ENCODE measurements at regions of chr17 and their contacts with region 1.

Region 1: DNA sequence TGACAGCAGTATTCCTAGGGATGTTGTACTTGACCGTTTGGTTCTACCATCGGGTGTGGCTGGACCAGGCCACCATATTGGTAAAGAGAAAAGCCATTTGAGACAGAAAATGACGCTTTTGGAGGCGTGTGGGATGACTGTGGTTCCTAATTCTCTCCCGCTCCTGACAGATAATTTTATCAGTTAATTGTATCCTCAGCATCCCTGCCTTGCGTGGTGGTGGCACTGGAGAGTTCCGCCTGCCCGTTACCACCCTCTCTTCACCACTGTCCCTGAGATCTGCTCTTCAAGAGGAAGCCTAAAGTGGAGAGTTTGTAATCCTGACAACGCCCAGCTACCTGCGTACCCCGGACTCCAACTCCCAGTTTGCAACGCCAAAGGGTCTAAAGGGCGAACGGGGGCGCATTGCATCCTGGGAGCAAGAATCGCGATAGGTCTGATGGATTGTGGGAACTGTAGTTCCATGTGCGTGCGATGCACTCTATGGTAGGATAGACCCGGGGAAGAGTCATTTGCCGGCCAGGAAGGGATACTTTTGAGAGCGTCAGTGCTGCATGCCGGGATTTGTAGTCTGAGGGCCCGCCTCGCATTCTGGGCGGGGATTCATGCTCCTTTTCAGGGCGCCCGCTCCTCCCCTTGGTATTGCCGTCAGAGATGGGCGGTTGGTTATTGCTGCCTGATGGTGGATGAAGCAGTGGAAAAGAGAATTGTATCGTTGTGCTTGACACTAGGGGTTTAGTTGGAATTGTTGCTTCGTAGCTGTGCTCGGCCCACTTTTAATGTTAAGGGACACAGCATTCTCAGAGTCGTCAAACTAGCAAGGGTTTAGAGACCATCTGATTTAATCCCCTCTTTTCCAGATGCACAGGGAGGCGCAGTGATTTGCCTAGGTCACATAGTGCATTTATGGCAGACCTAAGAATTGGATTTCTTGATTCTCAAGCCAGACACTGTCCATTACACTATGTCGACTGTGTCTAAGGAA is 965 bp upstream of the PHF12 start:
- DNase-seq: peak; percentile 94 to 98 (median 98)
- ATAC-seq: peak; percentile 82 to 91 (median 88)
- H3K4me3 ChIP-seq: peak overlapping the region; percentile 27 to 99 (median 74)
- H3K27ac ChIP-seq: peak overlapping the region; percentile 90 to 100 (median 99)
- H3K4me1 ChIP-seq: peaks cover 0 to 40% (median 19%) of the 10 kb centered on the region in 12 donors
- H3K27me3 ChIP-seq: no peaks in the 10 kb centered on the region
- CTCF ChIP-seq: peak in 1 of 12 donors; percentile 15
- POLR2A ChIP-seq: peak in 1 of 2 donors; percentile 46

Region 2: DNA sequence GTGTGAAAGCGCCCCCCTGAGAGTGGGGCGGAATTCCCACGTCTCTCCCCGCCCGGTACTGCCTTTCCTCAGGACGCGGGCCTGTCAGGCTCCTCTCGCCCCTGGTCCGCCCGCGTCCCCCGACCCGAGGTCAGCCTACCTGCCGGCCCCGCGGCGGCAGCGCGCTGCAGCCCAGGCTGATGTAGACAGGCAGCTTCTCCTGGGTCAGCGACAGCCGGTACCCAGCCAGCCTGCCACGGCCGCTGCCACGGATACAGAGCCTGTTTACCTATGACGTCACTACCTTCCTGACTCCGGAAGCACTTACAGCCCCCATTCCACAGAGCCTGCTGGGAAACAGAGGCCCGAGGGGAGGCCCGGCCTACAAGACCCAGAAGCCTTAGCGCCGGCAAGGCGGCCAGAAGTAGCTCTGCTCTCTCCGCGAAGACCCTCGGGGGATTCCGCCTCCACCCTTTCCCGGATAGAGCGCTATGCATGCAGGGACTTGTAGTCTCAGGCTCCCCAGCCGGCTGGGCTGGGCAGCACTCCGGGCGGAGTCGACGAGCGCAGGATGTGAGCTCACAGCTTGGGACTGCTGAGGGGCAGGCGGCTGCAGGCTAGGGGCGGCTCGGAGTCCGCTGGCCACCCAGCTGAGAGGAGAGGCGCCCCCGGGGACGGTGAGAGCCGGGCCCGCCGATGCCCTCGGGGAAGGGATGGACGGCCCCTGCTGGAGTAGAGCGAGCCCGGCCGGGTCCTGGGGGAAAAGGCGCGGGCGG is 616.9 kb before region 1 on chr17 and contains the starts of genes IFT20 and TNFAIP1:
- intact Hi-C with region 1: loop called in 3 of 10 experiments (anchors 5 to 10 kb)
- DNase-seq: peak; percentile 99 to 100 (median 99)
- ATAC-seq: peak; percentile 96 to 98 (median 96)
- H3K4me3 ChIP-seq: peak within 1 kb of the TSS; percentile 70 to 99 (median 88)
- H3K27ac ChIP-seq: peak within 1 kb of the TSS; percentile 93 to 100 (median 98)
- H3K4me1 ChIP-seq: peaks cover 0 to 60% (median 54%) of the 10 kb centered on the region in 12 donors
- H3K27me3 ChIP-seq: no peaks in the 10 kb centered on the region
- CTCF ChIP-seq: no peak
- POLR2A ChIP-seq: peak; percentile 79 to 96
- total RNA-seq, gene IFT20: 7.9 to 16.7 (median 11.0) TPM
- total RNA-seq, gene TNFAIP1: 31.7 to 83.4 (median 50.3) TPM

Region 3: GRCh38 chr17:28854457-28855350 is 97.6 kb before region 1 on chr17 and contains the start of gene ERAL1:
- intact Hi-C with region 1: loop called in 1 of 10 experiments (anchors 5 kb)
- DNase-seq: peak; percentile 85 to 89 (median 88)
- ATAC-seq: peak; percentile 98 to 100 (median 100)
- H3K4me3 ChIP-seq: peak within 1 kb of the TSS; percentile 69 to 93 (median 76)
- H3K27ac ChIP-seq: peak within 1 kb of the TSS; percentile 5 to 88 (median 75)
- H3K4me1 ChIP-seq: peaks cover 0 to 17% (median 9%) of the 10 kb centered on the region in 12 donors
- H3K27me3 ChIP-seq: no peaks in the 10 kb centered on the region
- CTCF ChIP-seq: peak in 4 of 12 donors; percentile 5 to 32 (median 14)
- POLR2A ChIP-seq: peak in 1 of 2 donors; percentile 55
- total RNA-seq, gene ERAL1: 28.0 to 78.2 (median 41.1) TPM

Region 4: GRCh38 chr17:28896884-28897768 is 55.2 kb before region 1 on chr17 and contains the start of gene FLOT2:
- intact Hi-C with region 1: loop called in 5 of 10 experiments (anchors 5 kb)
- DNase-seq: peak; percentile 63 to 82 (median 64)
- ATAC-seq: peak; percentile 25 to 87 (median 77)
- H3K4me3 ChIP-seq: peak within 1 kb of the TSS; percentile 72 to 98 (median 92)
- H3K27ac ChIP-seq: peak within 1 kb of the TSS; percentile 60 to 97 (median 86)
- H3K4me1 ChIP-seq: peaks cover 3 to 69% (median 31%) of the 10 kb centered on the region in 12 donors
- H3K27me3 ChIP-seq: no peaks in the 10 kb centered on the region
- CTCF ChIP-seq: peak in 6 of 12 donors; percentile 9 to 45 (median 20)
- POLR2A ChIP-seq: peak in 1 of 2 donors; percentile 54
- total RNA-seq, gene FLOT2: 81.1 to 139 (median 95.2) TPM

Region 5: GRCh38 chr17:28902819-28903545 is 49.3 kb before region 1 on chr17 and contains the start of gene DHRS13:
- intact Hi-C with region 1: loop called in 5 of 10 experiments (anchors 5 kb)
- DNase-seq: peak; percentile 89 to 96 (median 91)
- ATAC-seq: peak; percentile 65 to 92 (median 90)
- H3K4me3 ChIP-seq: peak within 1 kb of the TSS; percentile 51 to 96 (median 76)
- H3K27ac ChIP-seq: peak within 1 kb of the TSS in 11 of 12 donors; percentile 58 to 86 (median 78)
- H3K4me1 ChIP-seq: peaks cover 0 to 40% (median 24%) of the 10 kb centered on the region in 12 donors
- H3K27me3 ChIP-seq: no peaks in the 10 kb centered on the region
- CTCF ChIP-seq: peak; percentile 67 to 93 (median 87)
- POLR2A ChIP-seq: peak in 1 of 2 donors; percentile 38
- total RNA-seq, gene DHRS13: 2.2 to 4.8 (median 2.6) TPM

Region 6: DNA sequence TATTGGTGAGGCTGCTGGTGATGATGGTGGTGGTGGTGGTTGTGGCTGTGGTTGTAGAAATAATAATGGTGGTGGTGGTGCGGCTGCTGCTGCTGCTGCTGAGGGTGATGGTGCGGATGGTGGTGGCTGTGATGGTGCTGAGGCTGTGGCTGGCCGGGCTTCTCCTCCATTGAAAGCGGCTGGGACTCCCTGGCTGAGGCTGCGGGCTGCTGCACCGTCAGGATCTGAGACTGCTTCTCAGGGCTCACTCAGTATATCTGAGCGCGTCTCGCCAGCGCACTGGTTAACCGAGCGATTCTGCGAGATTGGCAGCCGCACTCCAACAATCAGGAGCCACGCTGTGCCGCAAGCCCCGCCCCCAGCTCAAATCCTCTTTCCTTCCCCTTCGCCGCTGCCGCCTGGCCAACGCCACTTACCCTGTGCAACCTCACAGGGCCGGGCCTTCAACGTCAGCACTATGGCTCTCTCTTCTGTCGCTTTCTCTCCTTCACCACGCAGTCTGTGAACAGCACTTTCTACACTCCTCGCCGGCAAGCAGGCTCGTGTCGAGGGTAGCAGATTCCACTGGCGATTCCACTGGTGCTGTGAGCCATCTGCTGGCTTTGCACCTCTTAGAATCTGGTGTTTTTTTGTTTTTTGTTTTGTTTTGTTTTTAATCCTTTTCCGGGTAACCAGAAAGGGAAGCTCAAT is 341.8 kb after region 1 on chr17 and contains the start of gene NUFIP2:
- intact Hi-C with region 1: loop called in 1 of 10 experiments (anchors 10 kb)
- DNase-seq: peak; percentile 99 to 100 (median 100)
- ATAC-seq: peak; percentile 94 to 98 (median 98)
- H3K4me3 ChIP-seq: peak within 1 kb of the TSS; percentile 61 to 99 (median 90)
- H3K27ac ChIP-seq: peak within 1 kb of the TSS; percentile 92 to 100 (median 96)
- H3K4me1 ChIP-seq: peaks cover 5 to 38% (median 29%) of the 10 kb centered on the region in 12 donors
- H3K27me3 ChIP-seq: no peaks in the 10 kb centered on the region
- CTCF ChIP-seq: peak in 2 of 12 donors; percentile 19 to 30
- POLR2A ChIP-seq: peak; percentile 100
- total RNA-seq, gene NUFIP2: 24.2 to 51.5 (median 35.7) TPM

Measured in heart left ventricle (tissue), 16 donors.